Left cardiac atrium (tissue), 4 donors: ENCODE measurements at regions of chr12 and their contacts with region 1.

Region 1: DNA sequence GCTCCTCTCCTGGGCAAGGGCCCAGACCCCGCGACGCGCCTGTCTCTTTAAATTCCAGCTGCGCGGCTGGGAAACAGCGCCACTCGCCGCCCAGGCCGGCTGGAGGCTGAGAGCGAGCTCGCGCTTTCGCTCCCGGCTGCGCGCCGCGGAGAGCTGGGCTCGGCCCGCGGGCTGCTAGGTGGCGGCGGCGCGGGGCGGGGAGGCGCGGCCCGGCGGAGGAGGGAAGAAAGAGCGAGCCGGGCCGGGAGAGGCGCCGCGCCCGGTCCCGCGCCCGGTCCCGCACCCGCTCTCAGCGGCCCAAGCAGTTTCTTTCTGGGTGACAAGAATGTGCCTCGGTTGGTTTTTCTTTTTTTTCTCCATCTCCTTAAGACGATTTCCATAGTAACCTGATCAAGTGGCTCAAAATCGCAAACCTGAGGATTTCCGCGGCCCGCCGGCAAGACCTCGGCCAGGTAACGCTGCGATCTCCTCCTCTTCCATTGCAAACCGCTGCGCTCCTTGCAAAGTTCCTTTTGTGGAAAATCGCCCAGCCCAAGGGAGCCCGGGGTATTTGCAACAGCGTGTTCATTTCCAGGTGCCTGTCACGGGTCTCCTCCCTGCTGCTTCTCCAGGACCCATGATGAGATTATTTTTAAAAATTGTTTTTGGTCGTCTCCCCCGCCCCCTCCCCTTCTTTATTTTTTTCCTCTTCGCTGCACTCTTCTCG is 259.5 kb upstream of the E2F7 start:
- DNase-seq: peak; percentile 85
- ATAC-seq: peak; percentile 95 to 99

Region 2: DNA sequence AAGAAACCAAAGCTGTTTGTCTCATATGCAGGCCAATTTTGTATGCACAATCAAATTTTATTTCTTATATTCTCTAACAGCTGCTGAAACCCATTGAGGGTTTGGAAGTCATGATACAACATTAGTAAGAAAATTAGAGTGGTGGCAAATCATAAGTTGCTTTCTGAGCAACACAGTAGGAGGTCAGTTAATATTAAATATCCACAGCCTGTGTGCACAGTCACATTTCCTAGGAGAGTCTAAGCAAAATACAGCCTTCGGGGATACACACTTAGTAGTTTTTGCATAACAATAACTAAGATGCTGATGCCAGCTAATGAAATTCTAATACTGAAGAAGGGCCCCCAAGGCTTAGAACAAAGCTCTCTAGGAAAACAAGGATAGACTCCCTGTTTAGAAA is 50.0 kb before region 1 on chr12:
- intact Hi-C with region 1: no loop called
- DNase-seq: no peak
- ATAC-seq: no peak

Region 3: DNA sequence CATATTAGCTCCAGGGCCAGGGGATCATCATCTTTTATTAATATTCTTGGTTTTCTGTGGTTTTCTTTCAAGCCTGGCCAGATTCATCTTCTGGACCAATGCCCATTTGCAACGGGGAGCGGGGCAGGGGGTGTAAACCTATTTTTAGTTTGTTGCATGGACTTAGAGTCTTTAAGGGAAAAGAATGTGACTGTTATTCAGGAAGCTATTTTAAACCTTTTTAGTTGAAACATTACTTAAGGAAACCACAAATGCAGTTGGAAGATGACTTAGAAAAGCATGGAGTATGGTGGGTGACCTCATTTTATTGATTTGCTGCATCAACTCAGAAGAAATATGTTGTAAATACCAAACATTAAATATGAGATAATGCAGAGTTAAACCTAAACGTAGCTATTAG is 108.9 kb after region 1 on chr12:
- intact Hi-C with region 1: loop called in 1 of 2 experiments (anchors 10 kb)
- DNase-seq: no peak
- ATAC-seq: no peak